ENCODE measurements at regions of chr6 and their contacts with region 1.

Region 1: DNA sequence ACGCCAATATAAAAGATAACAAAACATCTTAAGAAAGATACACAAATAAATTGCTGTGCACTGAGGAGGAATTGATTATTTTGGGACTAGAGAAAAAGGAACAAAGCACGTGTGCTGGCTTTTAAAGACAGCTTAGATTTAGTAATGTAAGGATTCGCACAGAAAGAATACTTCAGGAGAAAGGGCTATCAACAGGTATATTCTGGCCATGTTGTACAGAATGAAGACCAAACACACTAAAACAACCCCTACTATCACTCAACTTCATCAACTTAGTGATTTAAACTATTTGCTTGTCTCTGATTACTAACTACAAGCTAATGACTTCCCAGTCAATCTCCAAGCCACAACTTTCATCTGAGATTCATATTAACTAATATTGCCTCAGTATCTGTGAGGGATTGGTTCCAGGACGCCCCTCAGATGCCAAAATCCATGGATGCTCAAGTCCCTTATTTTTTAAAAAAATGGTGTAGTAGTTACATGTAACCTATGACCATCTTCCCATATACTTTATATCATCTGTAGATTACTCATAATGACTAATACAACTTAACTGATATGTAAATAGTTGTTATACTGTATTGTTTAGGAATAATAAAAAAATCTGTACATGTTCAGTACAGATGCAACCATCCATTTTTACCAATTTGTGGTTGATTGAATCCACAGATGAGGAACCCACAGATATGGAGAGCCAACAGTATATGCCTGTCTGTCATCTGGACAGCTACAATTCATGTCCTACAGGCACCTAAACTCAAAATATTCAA is 4.5 kb downstream of the DEK start:
- DNase-seq: no peak
- CTCF ChIP-seq: no peak

Region 2: GRCh38 chr6:18216411-18216810 is 43.5 kb before region 1 on chr6:
- in situ Hi-C with region 1: loop called (anchors 5 kb)
- DNase-seq: peak; percentile 30
- CTCF ChIP-seq: no peak

Measured in GM13976 (cell line).